Activated naive CD4-positive, alpha-beta T cell treated with anti-CD3 and anti-CD28 coated beads for 36 hours (primary cell): ENCODE measurements at regions of chr1 and their contacts with region 1.

Region 1: DNA sequence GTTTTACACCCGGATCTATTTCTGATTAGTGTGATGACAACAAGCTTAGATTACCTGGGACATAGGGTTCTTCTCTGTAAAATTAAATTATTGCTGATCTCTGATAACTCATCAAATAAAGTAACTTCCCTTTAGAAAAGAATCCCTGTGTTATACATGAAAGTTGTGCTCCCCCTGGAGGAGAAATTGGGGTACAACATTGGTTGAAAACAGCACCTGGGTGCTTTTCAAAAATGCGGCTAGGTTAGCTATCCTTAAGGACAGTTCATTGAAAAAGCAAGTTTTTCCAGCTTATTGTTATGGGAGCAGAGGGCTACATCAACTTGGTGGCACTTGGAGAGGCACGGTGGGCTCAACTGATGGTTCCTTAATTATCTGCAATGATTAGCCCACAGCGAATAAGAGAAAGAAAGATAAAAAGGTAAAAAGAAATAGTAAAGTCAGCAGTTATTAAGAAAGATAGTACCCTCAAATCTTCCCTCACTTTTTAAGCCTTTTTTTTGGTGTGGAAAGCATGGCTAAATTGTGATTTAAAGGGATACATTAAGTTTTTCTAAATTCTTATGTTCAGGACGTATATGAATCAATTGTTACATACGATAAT is 97.8 kb downstream of the FMN2 start:
- DNase-seq: peak; percentile 44
- H3K4me3 Mint-ChIP-seq: no peak overlapping the region
- H3K27ac Mint-ChIP-seq: no peak overlapping the region
- H3K4me1 Mint-ChIP-seq: peaks cover 2% of the 10 kb centered on the region
- H3K27me3 Mint-ChIP-seq: peaks cover 21% of the 10 kb centered on the region

Region 2: GRCh38 chr1:239914751-239915231 is 274.7 kb before region 1 on chr1:
- CTCF ChIA-PET with region 1: no interaction called
- intact Hi-C with region 1: no loop called
- DNase-seq: no peak
- H3K4me3 Mint-ChIP-seq: no peak overlapping the region
- H3K27ac Mint-ChIP-seq: no peak overlapping the region
- H3K4me1 Mint-ChIP-seq: no peaks in the 10 kb centered on the region
- H3K27me3 Mint-ChIP-seq: peaks cover 11% of the 10 kb centered on the region

Region 3: GRCh38 chr1:239951511-239952140 is 237.9 kb before region 1 on chr1:
- CTCF ChIA-PET with region 1: no interaction called
- intact Hi-C with region 1: loop called (anchors 1 kb)
- DNase-seq: peak; percentile 74
- H3K4me3 Mint-ChIP-seq: no peak overlapping the region
- H3K27ac Mint-ChIP-seq: no peak overlapping the region
- H3K4me1 Mint-ChIP-seq: no peaks in the 10 kb centered on the region
- H3K27me3 Mint-ChIP-seq: no peaks in the 10 kb centered on the region

Region 4: DNA sequence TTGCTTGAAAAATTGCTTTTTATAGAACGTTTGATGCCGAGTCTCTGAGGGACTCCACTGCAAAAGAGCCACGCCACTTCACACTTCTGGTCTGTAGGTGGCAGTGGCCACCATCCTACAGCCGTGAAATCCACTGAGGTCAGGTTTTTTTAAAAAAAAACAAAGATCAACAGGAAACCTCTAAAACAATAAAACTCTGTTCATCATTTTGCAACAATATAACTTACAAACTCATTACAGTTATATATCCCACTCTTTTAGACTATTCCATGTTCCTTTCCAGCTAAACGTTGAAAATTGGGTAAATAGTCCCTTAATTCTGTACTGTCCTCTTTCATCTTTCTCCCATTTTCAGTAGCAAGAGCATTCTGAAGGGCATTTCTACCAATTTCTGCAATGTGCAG is 162.4 kb before region 1 on chr1:
- CTCF ChIA-PET with region 1: interaction called, 3 read pairs
- intact Hi-C with region 1: loop called (anchors 1 kb)
- DNase-seq: peak; percentile 28
- H3K4me3 Mint-ChIP-seq: no peak overlapping the region
- H3K27ac Mint-ChIP-seq: no peak overlapping the region
- H3K4me1 Mint-ChIP-seq: no peaks in the 10 kb centered on the region
- H3K27me3 Mint-ChIP-seq: peaks cover 5% of the 10 kb centered on the region

Region 5: DNA sequence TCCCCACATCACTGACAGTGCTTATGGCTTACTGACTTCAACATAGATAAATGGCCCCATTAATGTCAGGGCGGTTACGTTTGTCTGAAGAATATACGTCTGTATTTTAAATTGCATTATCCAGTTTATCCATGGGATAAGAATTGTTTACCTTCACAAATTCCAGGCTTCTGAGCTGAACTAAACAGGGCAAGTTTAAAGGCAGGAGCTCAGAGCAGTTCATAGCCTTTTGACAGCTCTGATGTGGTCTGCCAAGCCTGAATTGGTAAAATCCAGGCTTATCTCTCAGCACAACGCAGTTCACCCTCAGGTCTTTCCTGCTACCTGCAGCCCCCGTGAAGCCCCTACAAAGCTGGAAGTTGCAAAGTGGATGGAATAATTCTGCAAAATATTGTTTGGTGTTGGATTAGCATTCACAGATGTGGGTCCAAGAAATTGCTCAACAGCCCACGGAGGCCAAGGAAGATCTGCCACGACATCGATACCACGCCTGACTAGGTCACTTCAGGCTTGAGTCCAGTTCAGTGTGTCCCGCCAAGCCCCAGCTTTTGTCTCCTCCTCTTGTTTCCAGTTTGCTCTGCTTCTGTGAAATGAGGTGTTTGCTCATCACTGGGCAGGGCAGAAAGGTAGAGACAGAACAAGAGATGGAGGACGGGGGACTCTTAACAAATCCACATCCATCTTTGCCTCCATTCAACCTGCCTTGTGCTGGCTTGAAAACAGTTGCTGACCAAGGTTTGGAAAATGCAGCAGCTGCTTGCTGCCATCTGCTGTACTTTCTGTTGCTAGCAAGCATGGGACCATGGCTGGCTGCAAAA is 502.2 kb after region 1 on chr1:
- CTCF ChIA-PET with region 1: interaction called, 3 read pairs
- intact Hi-C with region 1: loop called (anchors 1 kb)
- DNase-seq: peak; percentile 30
- H3K4me3 Mint-ChIP-seq: no peak overlapping the region
- H3K27ac Mint-ChIP-seq: no peak overlapping the region
- H3K4me1 Mint-ChIP-seq: peaks cover 9% of the 10 kb centered on the region
- H3K27me3 Mint-ChIP-seq: no peaks in the 10 kb centered on the region

Region 6: DNA sequence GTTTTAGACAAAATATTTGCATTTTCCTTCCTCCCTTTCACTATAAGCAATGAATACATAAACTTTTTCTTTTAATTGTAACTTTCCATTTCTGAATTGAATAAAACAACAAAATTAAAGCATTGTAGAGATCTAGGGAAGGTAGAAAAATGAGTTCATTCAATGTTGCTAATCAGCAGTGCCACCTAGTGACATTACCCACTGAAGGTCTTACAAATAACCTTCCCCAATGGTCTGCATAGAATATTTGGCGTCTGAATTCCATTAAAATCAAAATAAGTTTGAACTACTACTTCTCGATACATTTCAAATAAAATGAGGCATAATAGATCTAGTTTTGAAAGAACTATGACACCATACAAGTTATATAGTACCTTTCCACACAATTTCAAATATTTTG is 1310.4 kb after region 1 on chr1:
- CTCF ChIA-PET with region 1: no interaction called
- intact Hi-C with region 1: loop called (anchors 5 kb)
- DNase-seq: no peak
- H3K4me3 Mint-ChIP-seq: no peak overlapping the region
- H3K27ac Mint-ChIP-seq: no peak overlapping the region
- H3K4me1 Mint-ChIP-seq: peaks cover 3% of the 10 kb centered on the region
- H3K27me3 Mint-ChIP-seq: no peaks in the 10 kb centered on the region